CD4-positive, alpha-beta T cell (primary cell): ENCODE measurements at regions of chr7 and their contacts with region 1.

Region 1: GRCh38 chr7:7114706-7115295 is 67.5 kb upstream of the C1GALT1 start:
- DNase-seq: no peak
- ATAC-seq: no peak
- H3K4me3 ChIP-seq: no peak overlapping the region
- H3K4me3 Mint-ChIP-seq: no peak overlapping the region
- H3K27ac ChIP-seq: no peak overlapping the region
- H3K27ac Mint-ChIP-seq: no peak overlapping the region
- H3K4me1 ChIP-seq: no peaks in the 10 kb centered on the region
- H3K4me1 Mint-ChIP-seq: no peaks in the 10 kb centered on the region
- H3K27me3 ChIP-seq: no peaks in the 10 kb centered on the region
- H3K27me3 Mint-ChIP-seq: no peaks in the 10 kb centered on the region
- CTCF ChIP-seq: no peak

Region 2: DNA sequence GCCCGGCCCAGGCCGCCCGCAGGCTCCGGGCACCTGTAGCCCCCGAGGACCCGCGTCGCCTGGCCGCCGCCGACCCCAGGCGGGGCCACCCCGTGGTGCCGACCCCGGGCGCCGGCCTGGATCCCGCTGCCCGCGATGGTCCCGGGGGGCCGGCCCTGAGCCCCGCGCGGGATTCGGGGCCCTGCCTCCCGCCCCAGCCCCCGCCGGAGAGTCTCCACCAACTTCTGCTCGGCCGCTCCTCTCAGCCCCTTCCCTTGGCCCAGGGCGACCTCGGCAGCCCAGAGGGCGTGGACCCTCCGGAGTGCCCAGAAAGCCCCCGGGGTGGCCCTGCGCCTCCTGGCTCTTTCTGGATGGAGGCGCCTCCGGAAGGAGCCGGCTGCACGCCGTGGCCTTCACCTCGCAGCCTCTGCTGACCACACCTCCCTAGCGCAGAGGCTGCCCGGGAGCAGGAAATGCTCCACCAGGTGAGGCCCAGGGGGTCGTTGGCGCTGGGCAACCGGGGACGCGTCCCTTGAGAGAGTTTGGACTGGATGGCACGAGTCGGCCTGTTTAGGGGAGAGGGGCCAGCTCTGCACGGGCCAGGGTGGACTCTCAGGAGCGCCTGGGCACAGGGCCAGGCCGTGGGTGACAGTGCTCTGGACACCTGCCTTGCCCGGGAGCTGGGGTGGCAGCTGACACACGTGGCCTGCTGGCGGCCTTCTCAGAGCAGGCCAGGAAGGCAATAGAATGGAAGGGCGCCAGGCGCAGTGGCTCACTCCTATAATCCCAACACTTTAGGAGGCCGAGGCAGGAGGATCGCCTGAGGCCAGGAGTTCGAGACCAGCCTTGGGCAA is 498.9 kb before region 1 on chr7:
- CTCF ChIA-PET with region 1: no interaction called
- POLR2A ChIA-PET with region 1: no interaction called
- intact Hi-C with region 1: no loop called
- DNase-seq: no peak
- ATAC-seq: no peak
- H3K4me3 ChIP-seq: peak overlapping the region; percentile 53
- H3K4me3 Mint-ChIP-seq: peak overlapping the region; percentile 68
- H3K27ac ChIP-seq: no peak overlapping the region
- H3K27ac Mint-ChIP-seq: no peak overlapping the region
- H3K4me1 ChIP-seq: peaks cover 37% of the 10 kb centered on the region
- H3K4me1 Mint-ChIP-seq: peaks cover 28% of the 10 kb centered on the region
- H3K27me3 ChIP-seq: peaks cover 0 to 11% of the 10 kb centered on the region in 2 experiments
- H3K27me3 Mint-ChIP-seq: peaks cover 5% of the 10 kb centered on the region
- CTCF ChIP-seq: no peak

Region 3: GRCh38 chr7:7151285-7151684 is 36.5 kb after region 1 on chr7:
- CTCF ChIA-PET with region 1: interaction called, 6 read pairs
- POLR2A ChIA-PET with region 1: interaction called, 3 read pairs
- intact Hi-C with region 1: loop called in 1 of 2 experiments (anchors 5 kb)
- DNase-seq: no peak
- ATAC-seq: no peak
- H3K4me3 ChIP-seq: no peak overlapping the region
- H3K4me3 Mint-ChIP-seq: no peak overlapping the region
- H3K27ac ChIP-seq: no peak overlapping the region
- H3K27ac Mint-ChIP-seq: no peak overlapping the region
- H3K4me1 ChIP-seq: peaks cover 5% of the 10 kb centered on the region
- H3K4me1 Mint-ChIP-seq: peaks cover 42% of the 10 kb centered on the region
- H3K27me3 ChIP-seq: no peaks in the 10 kb centered on the region
- H3K27me3 Mint-ChIP-seq: no peaks in the 10 kb centered on the region
- CTCF ChIP-seq: no peak